ENCODE measurements at regions of chr2 and their contacts with region 1.

Region 1: GRCh38 chr2:181998891-181999654 is 13.4 kb downstream of the PPP1R1C start:
- DNase-seq: no peak
- H3K4me3 ChIP-seq: no peak overlapping the region
- H3K27ac ChIP-seq: no peak overlapping the region
- H3K27me3 ChIP-seq: no peaks in the 10 kb centered on the region
- CTCF ChIP-seq: no peak

Region 2: DNA sequence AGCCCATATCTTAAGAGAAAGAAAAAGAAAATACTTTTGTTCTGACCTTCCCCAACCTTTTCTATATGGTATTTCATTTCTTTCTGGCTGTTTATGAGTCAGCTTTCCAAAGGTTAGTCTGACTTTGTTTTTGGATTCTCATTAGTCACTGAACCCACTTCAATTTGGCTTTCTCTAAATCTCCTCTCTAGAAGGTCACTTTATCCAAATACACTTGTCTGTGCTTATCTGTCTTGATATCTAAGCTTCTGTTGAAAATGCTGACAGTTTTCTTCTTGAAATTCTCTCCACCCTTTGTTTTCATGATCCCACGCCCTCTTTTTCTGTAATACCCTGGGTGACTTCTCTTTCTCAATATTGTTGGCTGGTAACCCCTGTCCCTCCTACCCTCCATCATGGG is 21.6 kb after region 1 on chr2:
- CTCF ChIA-PET with region 1: interaction called, 3 read pairs
- POLR2A ChIA-PET with region 1: interaction called, 12 read pairs
- DNase-seq: no peak
- H3K4me3 ChIP-seq: no peak overlapping the region
- H3K27ac ChIP-seq: no peak overlapping the region
- H3K27me3 ChIP-seq: no peaks in the 10 kb centered on the region
- CTCF ChIP-seq: no peak